ENCODE measurements at regions of chr1 and their contacts with region 1.

Region 1: DNA sequence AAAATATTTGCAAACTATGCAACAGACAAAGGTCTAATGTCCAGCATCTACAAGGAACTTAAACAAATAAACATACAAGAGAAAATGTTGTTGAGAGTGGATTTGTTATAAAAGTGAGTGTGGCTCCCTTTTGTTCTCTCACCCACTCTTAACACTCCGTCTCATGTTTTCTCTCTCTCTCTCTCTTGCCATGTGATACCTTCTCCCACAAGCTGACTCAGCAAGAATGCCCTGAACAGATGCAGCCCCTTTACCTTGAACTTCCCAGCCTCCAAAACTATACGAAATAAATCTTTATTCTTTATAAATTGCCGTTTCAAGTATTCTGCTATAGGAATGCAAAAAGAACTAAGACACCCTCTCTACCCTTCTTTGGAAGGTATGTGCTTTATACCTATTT is 234.1 kb downstream of the ADGRL2 start:
- DNase-seq: no peak
- H3K4me3 ChIP-seq: no peak overlapping the region
- H3K27ac ChIP-seq: no peak overlapping the region
- H3K4me1 ChIP-seq: no peaks in the 10 kb centered on the region
- H3K27me3 ChIP-seq: no peaks in the 10 kb centered on the region
- CTCF ChIP-seq: no peak
- POLR2A ChIP-seq: no peak

Region 2: GRCh38 chr1:82059959-82060358 is 25.1 kb after region 1 on chr1:
- intact Hi-C with region 1: loop called (anchors 2 kb)
- DNase-seq: no peak
- H3K4me3 ChIP-seq: no peak overlapping the region
- H3K27ac ChIP-seq: no peak overlapping the region
- H3K4me1 ChIP-seq: no peaks in the 10 kb centered on the region
- H3K27me3 ChIP-seq: no peaks in the 10 kb centered on the region
- CTCF ChIP-seq: no peak
- POLR2A ChIP-seq: no peak

Region 3: DNA sequence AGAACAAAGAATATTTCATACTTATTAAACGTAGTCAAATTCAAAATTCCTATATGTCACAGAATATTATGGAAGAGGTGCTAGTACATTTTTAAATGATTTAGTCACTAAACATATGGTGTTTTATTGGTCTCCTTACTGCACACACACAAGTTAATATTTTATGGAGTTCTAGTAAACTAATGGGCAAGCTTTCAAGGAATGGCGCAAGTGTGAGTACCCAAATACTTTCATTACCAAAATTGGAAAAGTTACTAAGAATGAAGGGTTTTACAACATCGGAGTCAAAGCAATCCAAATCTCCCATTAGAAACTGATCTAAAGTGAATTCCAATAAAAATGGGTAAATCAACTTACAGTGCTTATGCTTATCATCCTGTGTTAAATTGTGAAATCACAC is 687.8 kb after region 1 on chr1:
- intact Hi-C with region 1: no loop called
- DNase-seq: no peak
- H3K4me3 ChIP-seq: no peak overlapping the region
- H3K27ac ChIP-seq: no peak overlapping the region
- H3K4me1 ChIP-seq: no peaks in the 10 kb centered on the region
- H3K27me3 ChIP-seq: no peaks in the 10 kb centered on the region
- CTCF ChIP-seq: no peak
- POLR2A ChIP-seq: no peak